H1 (cell line): ENCODE measurements at regions of chr2 and their contacts with region 1.

Region 1: DNA sequence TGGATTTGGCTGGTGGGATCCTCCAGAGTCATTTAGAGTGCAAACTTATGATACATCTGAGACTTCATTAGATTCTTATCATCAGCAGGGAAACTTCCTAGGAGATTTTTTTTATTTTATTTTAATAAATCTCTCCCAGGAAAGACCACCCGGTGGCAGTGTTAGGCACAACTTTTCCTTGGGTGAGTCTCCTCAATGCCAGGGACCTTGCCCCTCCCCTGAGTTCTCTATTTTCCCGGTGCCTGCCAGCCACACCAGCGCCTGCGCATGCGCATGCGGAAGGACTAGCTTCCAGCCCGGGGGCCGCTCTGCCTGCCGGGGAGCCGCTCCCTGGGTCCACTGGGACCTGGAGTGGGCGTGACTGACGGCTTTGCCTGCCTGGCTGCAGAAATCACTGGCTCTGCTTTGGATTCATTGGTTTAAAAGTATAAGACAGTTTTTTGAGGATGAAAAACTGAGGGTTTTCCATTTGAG is 86.6 kb downstream of the TMEM182 start:
- DNase-seq: peak; percentile 70 to 91
- H3K4me3 ChIP-seq: peak overlapping the region in 2 of 4 experiments; percentile 9 to 46; a peak in 4 of 8 replicates
- H3K27ac ChIP-seq: no peak overlapping the region
- H3K4me1 ChIP-seq: peaks cover 0 to 3% (median 1%) of the 10 kb centered on the region in 4 experiments; a peak in 2 of 7 replicates
- H3K27me3 ChIP-seq: no peaks in the 10 kb centered on the region
- CTCF ChIP-seq: peak in 2 of 3 experiments; percentile 9 to 17; a peak in 2 of 4 replicates
- EP300 ChIP-seq: no peak
- POLR2A ChIP-seq: no peak
- RAD21 ChIP-seq: peak in 1 of 2 experiments; percentile 48; a peak in 2 of 4 replicates

Region 2: GRCh38 chr2:102815285-102815684 is 33.1 kb before region 1 on chr2:
- CTCF ChIA-PET with region 1: no interaction called
- POLR2A ChIA-PET with region 1: no interaction called
- DNase-seq: no peak
- H3K4me3 ChIP-seq: no peak overlapping the region
- H3K27ac ChIP-seq: no peak overlapping the region
- H3K4me1 ChIP-seq: no peaks in the 10 kb centered on the region
- H3K27me3 ChIP-seq: no peaks in the 10 kb centered on the region
- CTCF ChIP-seq: no peak
- EP300 ChIP-seq: no peak
- POLR2A ChIP-seq: no peak
- RAD21 ChIP-seq: no peak

Region 3: GRCh38 chr2:102872388-102872787 is 24.0 kb after region 1 on chr2:
- CTCF ChIA-PET with region 1: interaction called, 18 read pairs
- POLR2A ChIA-PET with region 1: no interaction called
- DNase-seq: no peak
- H3K4me3 ChIP-seq: no peak overlapping the region
- H3K27ac ChIP-seq: no peak overlapping the region
- H3K4me1 ChIP-seq: no peaks in the 10 kb centered on the region
- H3K27me3 ChIP-seq: no peaks in the 10 kb centered on the region
- CTCF ChIP-seq: no peak; a peak in 1 of 4 replicates
- EP300 ChIP-seq: no peak
- POLR2A ChIP-seq: no peak
- RAD21 ChIP-seq: peak; percentile 41 to 43